Activated CD4-positive, alpha-beta T cell treated with anti-CD3 and anti-CD28 coated beads for 36 hours (primary cell): ENCODE measurements at regions of chr10 and their contacts with region 1.

Region 1: GRCh38 chr10:93893646-93894515 is at the start of gene SLC35G1:
- DNase-seq: peak; percentile 84
- ATAC-seq: peak; percentile 94
- H3K4me3 Mint-ChIP-seq: peak within 1 kb of the TSS; percentile 77
- H3K27ac Mint-ChIP-seq: peak within 1 kb of the TSS; percentile 72
- H3K4me1 Mint-ChIP-seq: peaks cover 37% of the 10 kb centered on the region
- H3K27me3 Mint-ChIP-seq: peaks cover 14% of the 10 kb centered on the region
- total RNA-seq, gene SLC35G1: 3.6 to 4.1 TPM

Region 2: DNA sequence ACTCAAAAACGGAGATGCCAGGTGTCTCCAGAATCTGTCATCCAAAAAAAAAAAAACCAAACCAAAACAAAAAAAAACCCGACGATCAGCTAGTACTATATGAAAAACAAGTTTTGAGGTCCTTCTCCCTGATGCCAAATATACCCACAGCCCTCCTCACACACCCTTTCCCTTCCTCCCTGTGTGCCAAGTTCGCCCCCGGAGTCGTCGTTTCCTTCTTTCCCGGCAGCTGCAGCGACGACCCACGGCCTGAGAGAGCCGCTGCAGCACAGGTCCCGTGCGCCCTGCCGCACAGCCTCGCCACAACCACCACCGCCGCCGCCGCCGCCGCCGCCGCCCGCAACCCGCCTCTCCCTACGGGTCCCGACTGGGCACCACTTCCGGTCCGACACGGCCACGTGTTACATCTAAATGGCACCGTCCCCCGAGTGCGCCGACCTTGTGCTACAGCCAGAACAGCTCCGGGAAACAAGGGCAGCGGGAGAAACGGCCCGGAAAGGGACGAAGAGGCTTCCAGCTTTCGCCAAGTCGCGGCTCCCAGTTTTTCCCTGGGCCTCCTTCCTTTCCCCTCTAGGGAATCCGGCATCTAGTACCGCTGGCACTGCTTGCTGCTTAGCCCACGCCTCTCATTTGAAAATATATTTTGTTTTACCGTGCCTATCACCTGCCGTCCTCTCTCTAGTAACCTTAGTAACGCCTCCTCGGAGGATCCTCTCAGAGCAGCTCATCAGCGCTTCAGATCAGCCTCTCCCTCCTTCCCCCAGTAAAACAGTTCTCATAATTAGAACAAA is 191.5 kb before region 1 on chr10 and contains the start of gene FRA10AC1:
- CTCF ChIA-PET with region 1: interaction called, 4 read pairs
- POLR2A ChIA-PET with region 1: interaction called, 3 read pairs
- intact Hi-C with region 1: loop called (anchors 1 to 5 kb)
- DNase-seq: peak; percentile 93
- ATAC-seq: peak; percentile 84
- H3K4me3 Mint-ChIP-seq: no peak within 1 kb of the TSS
- H3K27ac Mint-ChIP-seq: no peak within 1 kb of the TSS
- H3K4me1 Mint-ChIP-seq: peaks cover 29% of the 10 kb centered on the region
- H3K27me3 Mint-ChIP-seq: no peaks in the 10 kb centered on the region
- total RNA-seq, gene FRA10AC1: 18.9 to 29.4 TPM

Region 3: DNA sequence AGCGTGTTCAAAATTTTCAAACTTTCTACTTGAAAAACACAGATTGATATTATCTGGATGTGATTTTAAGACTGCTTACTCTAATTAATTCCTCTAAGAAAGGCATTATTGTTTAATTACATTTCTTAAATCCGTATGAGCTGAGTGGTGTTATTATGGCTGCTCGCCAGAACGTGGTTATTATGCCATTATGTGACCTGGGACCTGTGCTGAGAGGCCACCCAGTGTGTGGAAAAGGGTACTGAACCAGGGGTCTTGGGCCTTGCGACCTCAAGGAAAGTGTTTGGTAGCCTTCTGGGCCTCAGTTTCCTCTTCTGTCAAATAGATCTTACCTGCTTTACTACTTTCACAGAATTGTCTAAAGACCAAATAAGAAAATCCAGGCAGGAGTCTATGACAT is 120.8 kb before region 1 on chr10:
- CTCF ChIA-PET with region 1: no interaction called
- POLR2A ChIA-PET with region 1: interaction called, 12 read pairs
- intact Hi-C with region 1: no loop called
- DNase-seq: no peak
- ATAC-seq: no peak
- H3K4me3 Mint-ChIP-seq: no peak overlapping the region
- H3K27ac Mint-ChIP-seq: no peak overlapping the region
- H3K4me1 Mint-ChIP-seq: no peaks in the 10 kb centered on the region
- H3K27me3 Mint-ChIP-seq: peaks cover 17% of the 10 kb centered on the region

Region 4: GRCh38 chr10:94803307-94803706 is 909.4 kb after region 1 on chr10:
- CTCF ChIA-PET with region 1: no interaction called
- POLR2A ChIA-PET with region 1: no interaction called
- intact Hi-C with region 1: no loop called
- DNase-seq: no peak
- ATAC-seq: no peak
- H3K4me3 Mint-ChIP-seq: no peak overlapping the region
- H3K27ac Mint-ChIP-seq: no peak overlapping the region
- H3K4me1 Mint-ChIP-seq: no peaks in the 10 kb centered on the region
- H3K27me3 Mint-ChIP-seq: no peaks in the 10 kb centered on the region